ENCODE measurements at regions of chr2 and their contacts with region 1.

Region 1: GRCh38 chr2:190343500-190344275 is at the start of gene INPP1:
- DNase-seq: peak; percentile 66
- CTCF ChIP-seq: no peak

Region 2: GRCh38 chr2:190319555-190320498 is 23.9 kb before region 1 on chr2 and contains the start of gene HIBCH:
- CTCF ChIA-PET with region 1: interaction called, 14 read pairs
- POLR2A ChIA-PET with region 1: interaction called, 3 read pairs
- DNase-seq: peak; percentile 87
- CTCF ChIP-seq: peak; percentile 46

Region 3: GRCh38 chr2:190360561-190360960 is 16.9 kb after region 1 on chr2:
- CTCF ChIA-PET with region 1: interaction called, 49 read pairs
- POLR2A ChIA-PET with region 1: no interaction called
- DNase-seq: no peak
- CTCF ChIP-seq: no peak

Region 4: DNA sequence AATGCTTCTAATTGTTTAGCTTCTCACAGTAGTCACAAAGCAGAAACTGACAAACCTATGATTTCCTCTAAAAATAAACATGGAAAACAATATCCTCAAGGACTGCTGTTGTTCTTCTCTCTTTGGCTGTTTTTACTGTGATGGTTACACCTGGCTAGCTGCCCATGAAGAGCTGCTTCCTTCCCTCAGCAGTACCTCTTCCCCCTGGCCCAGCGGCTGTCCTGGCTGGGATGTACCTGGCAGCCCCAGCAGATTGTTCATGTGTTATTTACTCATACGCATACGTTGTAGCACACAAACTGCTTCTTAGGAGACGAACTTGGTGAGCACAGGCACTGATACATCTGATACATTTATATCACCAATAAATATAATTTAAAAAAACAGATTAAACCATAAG is 163.4 kb after region 1 on chr2:
- CTCF ChIA-PET with region 1: no interaction called
- POLR2A ChIA-PET with region 1: no interaction called
- DNase-seq: no peak
- CTCF ChIP-seq: no peak

Region 5: GRCh38 chr2:190912731-190913130 is 569.0 kb after region 1 on chr2:
- CTCF ChIA-PET with region 1: no interaction called
- POLR2A ChIA-PET with region 1: no interaction called
- DNase-seq: no peak
- CTCF ChIP-seq: no peak

Measured in GM10248 (cell line).